ENCODE measurements at regions of chr6 and their contacts with region 1.

Region 1: GRCh38 chr6:56593801-56594318 is 48.8 kb downstream of the DST start:
- DNase-seq: no peak
- H3K4me3 ChIP-seq: no peak overlapping the region
- H3K27ac ChIP-seq: peak overlapping the region; percentile 42
- H3K4me1 ChIP-seq: peaks cover 19% of the 10 kb centered on the region
- H3K27me3 ChIP-seq: no peaks in the 10 kb centered on the region
- CTCF ChIP-seq: no peak
- POLR2A ChIP-seq: no peak

Region 2: DNA sequence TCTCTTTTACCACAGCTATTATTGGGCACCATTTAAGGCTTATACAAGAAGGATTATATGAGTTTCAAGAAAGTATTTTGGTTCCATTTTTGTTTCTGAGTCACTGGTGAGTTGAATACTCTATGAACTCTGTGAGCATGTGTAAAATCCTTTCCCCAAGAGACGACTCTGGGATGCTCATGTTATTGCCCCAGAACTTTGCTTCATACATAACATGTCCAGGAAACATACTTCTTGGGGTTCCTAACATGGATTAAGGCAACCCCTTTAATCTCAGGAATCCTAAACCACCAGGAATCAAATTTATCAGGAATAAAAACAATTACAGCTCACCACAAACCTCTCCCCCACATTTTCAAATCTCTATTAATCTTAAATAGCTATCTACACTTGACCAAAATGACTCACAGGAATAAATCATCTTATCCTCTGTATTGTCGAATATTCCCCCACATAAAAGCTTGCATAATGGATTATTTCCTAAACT is 229.0 kb before region 1 on chr6:
- intact Hi-C with region 1: loop called (anchors 5 kb)
- DNase-seq: no peak
- H3K4me3 ChIP-seq: no peak overlapping the region
- H3K27ac ChIP-seq: peak overlapping the region; percentile 14
- H3K4me1 ChIP-seq: peaks cover 3% of the 10 kb centered on the region
- H3K27me3 ChIP-seq: no peaks in the 10 kb centered on the region
- CTCF ChIP-seq: no peak
- POLR2A ChIP-seq: no peak

Region 3: GRCh38 chr6:56542364-56543331 is 51.2 kb before region 1 on chr6:
- intact Hi-C with region 1: no loop called
- DNase-seq: peak; percentile 96 to 99
- H3K4me3 ChIP-seq: peak overlapping the region; percentile 62 to 66
- H3K27ac ChIP-seq: peak overlapping the region; percentile 94
- H3K4me1 ChIP-seq: peaks cover 19% of the 10 kb centered on the region
- H3K27me3 ChIP-seq: no peaks in the 10 kb centered on the region
- CTCF ChIP-seq: peak in 2 of 3 experiments; percentile 36 to 39
- POLR2A ChIP-seq: peak; percentile 42 to 82

Region 4: DNA sequence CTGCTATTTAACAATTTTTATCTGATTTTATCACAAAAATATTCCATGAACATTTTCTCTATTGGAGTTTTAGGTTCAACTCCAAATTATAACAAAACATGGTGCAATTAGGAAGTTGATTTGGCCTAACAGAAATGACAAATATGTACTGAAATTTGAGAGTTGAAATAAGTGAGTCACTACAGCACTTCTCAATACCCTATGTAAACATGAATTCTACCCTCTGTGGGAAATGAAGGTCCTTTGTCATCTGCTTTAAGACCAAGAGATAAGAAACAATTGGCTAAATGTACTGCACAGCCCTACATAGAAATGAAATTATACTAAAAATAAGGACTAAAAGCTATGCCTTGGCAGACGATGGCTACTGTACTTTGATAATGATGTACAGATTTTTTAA is 274.8 kb after region 1 on chr6:
- intact Hi-C with region 1: no loop called
- DNase-seq: no peak
- H3K4me3 ChIP-seq: no peak overlapping the region
- H3K27ac ChIP-seq: no peak overlapping the region
- H3K4me1 ChIP-seq: peaks cover 17% of the 10 kb centered on the region
- H3K27me3 ChIP-seq: no peaks in the 10 kb centered on the region
- CTCF ChIP-seq: no peak
- POLR2A ChIP-seq: no peak